ENCODE measurements at regions of chrX and their contacts with region 1.

Region 1: GRCh38 chrX:16826207-16826606 is 39.9 kb downstream of the TXLNG start:
- DNase-seq: no peak
- ATAC-seq: peak; percentile 74
- H3K4me3 Mint-ChIP-seq: no peak overlapping the region
- H3K27ac Mint-ChIP-seq: no peak overlapping the region
- H3K4me1 Mint-ChIP-seq: peaks cover 19% of the 10 kb centered on the region
- H3K27me3 Mint-ChIP-seq: no peaks in the 10 kb centered on the region
- CTCF ChIP-seq: no peak

Region 2: GRCh38 chrX:16882702-16883486 is 56.7 kb after region 1 on chrX:
- CTCF ChIA-PET with region 1: interaction called, 15 read pairs
- POLR2A ChIA-PET with region 1: no interaction called
- intact Hi-C with region 1: no loop called
- DNase-seq: peak; percentile 86
- ATAC-seq: peak; percentile 87
- H3K4me3 Mint-ChIP-seq: peak overlapping the region; percentile 72
- H3K27ac Mint-ChIP-seq: peak overlapping the region; percentile 77
- H3K4me1 Mint-ChIP-seq: peaks cover 5% of the 10 kb centered on the region
- H3K27me3 Mint-ChIP-seq: no peaks in the 10 kb centered on the region
- CTCF ChIP-seq: peak; percentile 71

Region 3: GRCh38 chrX:16892504-16893362 is 66.5 kb after region 1 on chrX:
- CTCF ChIA-PET with region 1: interaction called, 10 read pairs
- POLR2A ChIA-PET with region 1: no interaction called
- intact Hi-C with region 1: no loop called
- DNase-seq: peak; percentile 67
- ATAC-seq: peak; percentile 76
- H3K4me3 Mint-ChIP-seq: no peak overlapping the region
- H3K27ac Mint-ChIP-seq: no peak overlapping the region
- H3K4me1 Mint-ChIP-seq: peaks cover 15% of the 10 kb centered on the region
- H3K27me3 Mint-ChIP-seq: peaks cover 4% of the 10 kb centered on the region
- CTCF ChIP-seq: peak; percentile 71

Region 4: DNA sequence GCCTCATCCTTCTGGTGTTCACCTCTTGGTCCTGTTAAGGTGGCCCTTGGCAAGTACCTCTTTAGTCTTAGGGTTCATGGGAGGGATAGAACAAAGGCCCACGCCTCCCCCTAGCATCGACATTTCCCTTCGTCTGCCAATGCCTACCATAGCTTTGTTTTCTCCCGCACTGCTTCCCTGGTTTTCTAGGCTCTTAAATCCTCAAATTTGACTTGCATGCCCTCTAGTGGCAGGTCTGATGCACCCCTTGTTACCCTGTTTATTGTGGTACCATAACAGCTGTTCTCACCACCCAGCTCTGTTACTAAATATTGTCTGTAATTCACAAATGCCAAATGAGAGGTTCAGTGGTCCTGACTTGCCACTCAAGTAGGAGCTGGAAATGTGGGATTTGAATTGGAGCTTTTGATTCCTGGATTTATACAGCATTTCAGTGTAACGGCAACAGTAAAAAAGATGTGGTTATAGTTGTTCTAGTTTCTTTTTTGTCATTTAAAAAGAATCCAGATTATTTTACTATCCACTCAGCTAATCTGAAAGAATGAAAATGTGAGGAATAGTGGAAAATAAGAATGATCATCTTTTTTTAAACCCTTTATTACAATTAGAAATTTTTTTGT is 220.4 kb after region 1 on chrX:
- CTCF ChIA-PET with region 1: interaction called, 10 read pairs
- POLR2A ChIA-PET with region 1: no interaction called
- intact Hi-C with region 1: no loop called
- DNase-seq: peak; percentile 65
- ATAC-seq: no peak
- H3K4me3 Mint-ChIP-seq: no peak overlapping the region
- H3K27ac Mint-ChIP-seq: no peak overlapping the region
- H3K4me1 Mint-ChIP-seq: no peaks in the 10 kb centered on the region
- H3K27me3 Mint-ChIP-seq: no peaks in the 10 kb centered on the region
- CTCF ChIP-seq: peak; percentile 42

Measured in activated CD8-positive, alpha-beta T cell treated with anti-CD3 and anti-CD28 coated beads for 36 hours (primary cell).